HEK293 (cell line): ENCODE measurements at regions of chr6 and their contacts with region 1.

Region 1: GRCh38 chr6:8006208-8006607 is 58.0 kb downstream of the BLOC1S5 start:
- H3K4me3 ChIP-seq: no peak overlapping the region
- H3K27ac ChIP-seq: no peak overlapping the region
- H3K4me1 ChIP-seq: no peaks in the 10 kb centered on the region
- CTCF ChIP-seq: peak; percentile 34; the same call in 1 of the 2 replicates

Region 2: DNA sequence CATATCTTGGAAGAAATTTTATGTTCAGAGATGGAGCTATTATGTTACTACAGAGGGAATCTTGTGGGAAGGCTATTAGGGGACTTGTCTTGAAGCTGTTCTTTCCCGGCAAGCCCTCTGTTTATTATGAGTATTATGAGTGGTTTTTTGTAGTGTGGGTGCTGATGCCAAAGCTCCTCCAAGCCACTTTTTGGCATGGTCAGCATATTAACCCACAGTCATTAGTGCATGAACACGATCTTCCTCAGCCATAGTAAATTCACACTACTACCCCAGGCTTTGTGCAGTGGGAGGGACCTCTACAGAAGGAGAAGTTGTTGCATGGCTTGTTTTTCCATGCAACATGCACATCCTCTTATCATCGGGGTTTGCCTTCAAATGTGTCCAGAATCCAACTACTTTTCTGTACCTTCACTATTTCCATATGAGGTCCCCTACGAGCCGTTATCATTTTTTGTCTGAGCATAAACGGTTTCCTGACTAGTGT is 286.8 kb before region 1 on chr6:
- CTCF ChIA-PET with region 1: interaction called, 75 read pairs
- POLR2A ChIA-PET with region 1: interaction called, 3 read pairs
- H3K4me3 ChIP-seq: no peak overlapping the region
- H3K27ac ChIP-seq: no peak overlapping the region
- H3K4me1 ChIP-seq: no peaks in the 10 kb centered on the region
- CTCF ChIP-seq: no peak

Region 3: GRCh38 chr6:7992002-7992815 is 14.0 kb before region 1 on chr6:
- CTCF ChIA-PET with region 1: interaction called, 15 read pairs
- POLR2A ChIA-PET with region 1: no interaction called
- H3K4me3 ChIP-seq: no peak overlapping the region
- H3K27ac ChIP-seq: no peak overlapping the region
- H3K4me1 ChIP-seq: peaks cover 7% of the 10 kb centered on the region; the same call in 1 of the 2 replicates
- CTCF ChIP-seq: no peak

Region 4: DNA sequence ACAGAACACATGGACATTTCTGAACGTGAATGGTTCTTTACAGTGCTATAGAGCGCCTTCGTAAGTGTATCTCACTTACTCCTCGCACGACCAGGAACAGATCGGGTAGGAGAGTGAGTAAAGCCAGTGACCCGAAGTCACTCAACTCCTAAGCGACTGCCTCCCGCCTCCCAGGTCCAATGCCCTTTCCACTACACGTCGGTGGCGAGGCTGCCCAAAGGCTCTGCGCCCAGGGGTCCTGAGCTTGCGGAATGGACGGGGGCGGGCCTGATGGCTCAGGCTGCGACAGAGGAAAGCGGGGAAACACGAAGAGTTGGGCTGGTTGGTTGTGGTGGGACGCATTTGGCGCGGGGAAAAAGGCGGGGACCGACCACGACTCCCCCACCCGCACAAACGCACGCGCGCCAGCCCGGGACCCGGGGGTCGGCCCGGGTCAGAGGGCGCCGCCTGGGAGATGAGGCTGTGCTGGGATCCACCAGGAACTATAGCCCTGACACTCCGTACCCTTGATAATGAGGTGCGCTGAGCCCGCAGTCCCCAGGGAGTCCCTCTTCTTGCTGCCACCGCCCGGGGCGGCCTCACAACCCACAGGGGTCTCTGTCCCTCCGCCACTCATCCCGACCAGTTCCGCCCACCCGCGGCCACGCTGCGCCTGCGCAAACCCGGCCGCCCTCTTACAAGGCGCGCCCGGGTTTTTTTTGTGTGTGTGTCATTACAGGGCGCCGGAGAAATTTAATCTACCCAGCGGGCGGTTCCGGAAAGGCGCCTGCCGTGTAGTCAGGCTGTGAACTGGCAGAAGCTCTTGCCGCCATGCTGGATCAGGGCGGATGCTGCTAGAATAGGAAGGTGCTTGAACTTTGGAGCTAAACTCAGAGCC is 57.8 kb after region 1 on chr6 and contains the start of gene BLOC1S5:
- CTCF ChIA-PET with region 1: interaction called, 11 read pairs
- POLR2A ChIA-PET with region 1: no interaction called
- H3K4me3 ChIP-seq: peak within 1 kb of the TSS; percentile 64
- H3K27ac ChIP-seq: peak within 1 kb of the TSS; percentile 56; the same call in 1 of the 2 replicates
- H3K4me1 ChIP-seq: peaks cover 3% of the 10 kb centered on the region
- CTCF ChIP-seq: peak; percentile 73